Activated CD8-positive, alpha-beta T cell treated with anti-CD3 and anti-CD28 coated beads for 36 hours (primary cell): ENCODE measurements at regions of chr1 and their contacts with region 1.

Region 1: DNA sequence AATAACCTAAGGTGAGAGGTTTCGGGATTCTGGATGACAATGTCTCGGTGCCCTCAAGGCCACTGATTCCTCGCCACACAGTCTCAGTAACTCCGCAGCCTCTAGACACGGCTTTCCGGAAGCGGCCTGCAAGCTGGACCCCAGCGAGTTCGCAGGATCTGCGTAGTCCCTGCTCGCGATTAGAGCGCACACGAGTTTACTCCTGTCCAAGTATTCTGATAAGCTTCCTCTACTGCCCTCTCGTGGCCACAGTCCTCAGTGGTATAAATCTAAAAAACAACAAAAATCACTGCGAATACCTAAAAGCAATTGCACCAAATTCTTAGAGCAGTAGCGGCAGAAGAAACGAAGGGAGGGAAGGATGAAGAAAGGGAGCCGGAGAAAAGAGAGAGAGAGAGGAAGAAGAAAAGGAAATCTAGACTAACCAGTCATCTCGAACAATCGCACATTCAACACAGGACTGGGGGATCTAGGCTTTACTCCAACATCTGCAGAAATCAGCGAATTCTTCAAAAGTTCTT is 1.1 kb upstream of the PLXNA2 start:
- DNase-seq: peak; percentile 95
- ATAC-seq: peak; percentile 77
- H3K4me3 Mint-ChIP-seq: peak overlapping the region; percentile 57
- H3K27ac Mint-ChIP-seq: no peak overlapping the region
- H3K4me1 Mint-ChIP-seq: peaks cover 10% of the 10 kb centered on the region
- H3K27me3 Mint-ChIP-seq: peaks cover 19% of the 10 kb centered on the region
- CTCF ChIP-seq: peak; percentile 74

Region 2: DNA sequence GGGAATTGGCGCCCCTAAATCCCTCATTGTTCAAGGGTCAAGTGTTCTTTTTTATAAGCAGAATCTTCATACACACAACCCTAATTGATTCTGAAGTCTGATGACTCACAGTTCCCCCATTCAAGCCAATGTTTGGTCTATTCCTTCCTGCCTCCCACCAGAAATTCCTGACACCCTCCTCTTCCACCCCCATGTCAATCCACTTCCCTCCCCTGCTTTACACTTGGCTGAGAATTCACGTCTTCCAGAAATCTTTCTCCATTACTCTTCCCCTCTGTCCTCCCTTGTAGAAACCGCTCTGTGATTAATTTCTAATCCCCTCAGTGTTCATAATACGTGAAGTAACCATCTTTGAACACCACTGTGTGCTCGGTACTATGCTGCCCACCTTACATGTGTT is 258.1 kb before region 1 on chr1:
- CTCF ChIA-PET with region 1: no interaction called
- POLR2A ChIA-PET with region 1: no interaction called
- intact Hi-C with region 1: no loop called
- DNase-seq: no peak
- ATAC-seq: no peak
- H3K4me3 Mint-ChIP-seq: no peak overlapping the region
- H3K27ac Mint-ChIP-seq: no peak overlapping the region
- H3K4me1 Mint-ChIP-seq: no peaks in the 10 kb centered on the region
- H3K27me3 Mint-ChIP-seq: peaks cover 9% of the 10 kb centered on the region
- CTCF ChIP-seq: no peak

Region 3: DNA sequence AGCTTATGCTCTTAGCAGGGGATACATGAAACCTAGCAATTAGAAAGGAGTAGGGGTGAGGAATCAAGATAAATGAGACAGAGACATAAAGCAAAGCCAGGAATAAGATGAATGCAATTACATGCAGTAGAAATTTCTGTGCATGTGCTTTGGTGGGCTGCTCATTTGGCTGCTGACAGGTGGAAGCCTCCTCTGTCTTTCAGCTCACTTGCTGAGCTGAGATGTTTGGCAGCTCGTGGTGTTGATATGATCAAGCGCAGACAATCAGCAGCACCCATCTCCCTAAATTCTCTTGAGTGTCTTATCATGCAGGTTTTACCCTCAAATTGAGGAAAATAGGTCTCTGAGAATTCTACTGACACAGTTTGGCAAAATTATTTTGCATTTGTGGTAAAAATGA is 226.0 kb before region 1 on chr1:
- CTCF ChIA-PET with region 1: interaction called, 65 read pairs
- POLR2A ChIA-PET with region 1: interaction called, 7 read pairs
- intact Hi-C with region 1: loop called (anchors 5 kb)
- DNase-seq: no peak
- ATAC-seq: no peak
- H3K4me3 Mint-ChIP-seq: no peak overlapping the region
- H3K27ac Mint-ChIP-seq: no peak overlapping the region
- H3K4me1 Mint-ChIP-seq: no peaks in the 10 kb centered on the region
- H3K27me3 Mint-ChIP-seq: no peaks in the 10 kb centered on the region
- CTCF ChIP-seq: no peak

Region 4: DNA sequence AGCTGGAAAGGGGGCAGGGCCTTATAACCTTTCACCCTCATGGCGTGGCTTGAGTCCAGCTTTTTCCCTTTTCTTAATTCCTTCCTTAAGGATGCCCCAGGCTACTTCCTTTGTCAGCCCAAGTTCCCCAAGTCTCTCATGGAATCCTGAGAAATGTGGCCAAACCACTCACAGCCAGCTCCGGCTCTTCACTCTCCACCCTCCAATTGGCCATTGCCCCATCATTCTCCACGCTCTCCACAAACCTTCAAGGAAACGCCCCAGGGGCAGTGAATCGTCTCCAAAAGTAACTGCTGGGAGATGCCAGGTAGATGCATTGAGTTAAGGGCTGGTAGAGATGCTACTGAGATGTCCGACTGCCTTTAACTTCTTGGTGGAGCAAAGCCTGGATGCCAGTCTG is 220.8 kb before region 1 on chr1:
- CTCF ChIA-PET with region 1: interaction called, 65 read pairs
- POLR2A ChIA-PET with region 1: interaction called, 7 read pairs
- intact Hi-C with region 1: loop called (anchors 5 kb)
- DNase-seq: no peak
- ATAC-seq: no peak
- H3K4me3 Mint-ChIP-seq: no peak overlapping the region
- H3K27ac Mint-ChIP-seq: no peak overlapping the region
- H3K4me1 Mint-ChIP-seq: no peaks in the 10 kb centered on the region
- H3K27me3 Mint-ChIP-seq: no peaks in the 10 kb centered on the region
- CTCF ChIP-seq: no peak

Region 5: GRCh38 chr1:208029381-208030287 is 215.6 kb before region 1 on chr1:
- CTCF ChIA-PET with region 1: interaction called, 22 read pairs
- POLR2A ChIA-PET with region 1: interaction called, 3 read pairs
- intact Hi-C with region 1: loop called (anchors 5 kb)
- DNase-seq: no peak
- ATAC-seq: no peak
- H3K4me3 Mint-ChIP-seq: no peak overlapping the region
- H3K27ac Mint-ChIP-seq: no peak overlapping the region
- H3K4me1 Mint-ChIP-seq: no peaks in the 10 kb centered on the region
- H3K27me3 Mint-ChIP-seq: no peaks in the 10 kb centered on the region
- CTCF ChIP-seq: no peak

Region 6: DNA sequence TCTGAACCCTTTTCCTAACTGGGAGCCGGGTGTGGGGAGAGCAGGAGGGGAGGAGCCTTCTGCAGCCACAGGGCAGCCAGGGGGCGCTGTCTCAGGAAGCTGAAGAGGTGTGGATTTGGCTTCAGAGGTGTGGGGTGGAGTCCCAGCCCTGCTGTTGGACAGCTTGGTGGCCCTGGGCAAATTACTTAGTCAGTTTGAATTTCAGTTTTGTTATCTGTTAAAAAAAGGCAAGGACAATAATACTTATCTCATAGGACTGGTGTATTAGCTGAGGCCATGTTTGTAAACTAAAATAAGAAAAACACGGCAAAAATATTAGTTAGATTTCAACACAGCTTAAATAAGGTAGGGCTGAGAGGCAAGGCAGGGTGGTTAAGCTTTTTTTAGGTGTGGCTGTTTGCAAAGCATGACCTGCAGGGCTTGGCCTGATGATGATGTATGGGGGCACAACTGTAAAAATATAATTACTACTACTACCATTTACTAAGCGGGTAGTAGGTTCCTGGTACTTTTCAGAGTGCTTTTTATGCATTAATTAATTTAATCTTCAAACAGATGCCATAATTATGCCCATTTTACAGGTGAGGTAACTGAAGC is 112.9 kb before region 1 on chr1:
- CTCF ChIA-PET with region 1: interaction called, 54 read pairs
- POLR2A ChIA-PET with region 1: no interaction called
- intact Hi-C with region 1: loop called (anchors 2 kb)
- DNase-seq: peak; percentile 81
- ATAC-seq: peak; percentile 93
- H3K4me3 Mint-ChIP-seq: no peak overlapping the region
- H3K27ac Mint-ChIP-seq: no peak overlapping the region
- H3K4me1 Mint-ChIP-seq: peaks cover 4% of the 10 kb centered on the region
- H3K27me3 Mint-ChIP-seq: peaks cover 16% of the 10 kb centered on the region
- CTCF ChIP-seq: peak; percentile 92

Region 7: GRCh38 chr1:208159555-208160258 is 85.5 kb before region 1 on chr1:
- CTCF ChIA-PET with region 1: no interaction called
- POLR2A ChIA-PET with region 1: no interaction called
- intact Hi-C with region 1: no loop called
- DNase-seq: no peak
- ATAC-seq: no peak
- H3K4me3 Mint-ChIP-seq: no peak overlapping the region
- H3K27ac Mint-ChIP-seq: no peak overlapping the region
- H3K4me1 Mint-ChIP-seq: no peaks in the 10 kb centered on the region
- H3K27me3 Mint-ChIP-seq: peaks cover 11% of the 10 kb centered on the region
- CTCF ChIP-seq: no peak

Region 8: DNA sequence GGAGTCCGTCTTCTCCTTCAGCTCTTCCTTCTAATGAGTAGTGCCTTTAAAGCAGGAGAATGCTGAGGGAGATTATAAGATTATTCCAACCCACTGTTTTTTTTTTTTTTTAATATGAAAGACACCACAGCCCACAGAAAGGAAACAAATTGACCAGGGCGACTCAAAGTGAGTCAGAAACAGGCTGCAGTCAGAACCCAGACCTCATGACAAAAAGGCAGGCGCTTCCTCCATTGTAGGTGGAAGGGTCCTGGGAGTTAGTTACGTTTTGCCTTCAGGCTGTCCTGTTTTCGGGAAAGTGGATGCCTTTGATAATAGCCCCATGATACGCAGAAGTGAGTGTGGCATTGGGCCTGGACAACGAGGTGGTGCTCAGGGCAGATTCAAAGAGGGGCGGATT is 22.1 kb before region 1 on chr1:
- CTCF ChIA-PET with region 1: interaction called, 10 read pairs
- POLR2A ChIA-PET with region 1: no interaction called
- intact Hi-C with region 1: no loop called
- DNase-seq: no peak
- ATAC-seq: no peak
- H3K4me3 Mint-ChIP-seq: no peak overlapping the region
- H3K27ac Mint-ChIP-seq: no peak overlapping the region
- H3K4me1 Mint-ChIP-seq: no peaks in the 10 kb centered on the region
- H3K27me3 Mint-ChIP-seq: peaks cover 7% of the 10 kb centered on the region
- CTCF ChIP-seq: no peak

Region 9: GRCh38 chr1:208270651-208271111 is 25.4 kb after region 1 on chr1:
- CTCF ChIA-PET with region 1: interaction called, 11 read pairs
- POLR2A ChIA-PET with region 1: no interaction called
- intact Hi-C with region 1: no loop called
- DNase-seq: no peak
- ATAC-seq: no peak
- H3K4me3 Mint-ChIP-seq: no peak overlapping the region
- H3K27ac Mint-ChIP-seq: no peak overlapping the region
- H3K4me1 Mint-ChIP-seq: no peaks in the 10 kb centered on the region
- H3K27me3 Mint-ChIP-seq: peaks cover 31% of the 10 kb centered on the region
- CTCF ChIP-seq: no peak